AG04450 (cell line): ENCODE measurements at regions of chr9 and their contacts with region 1.

Region 1: DNA sequence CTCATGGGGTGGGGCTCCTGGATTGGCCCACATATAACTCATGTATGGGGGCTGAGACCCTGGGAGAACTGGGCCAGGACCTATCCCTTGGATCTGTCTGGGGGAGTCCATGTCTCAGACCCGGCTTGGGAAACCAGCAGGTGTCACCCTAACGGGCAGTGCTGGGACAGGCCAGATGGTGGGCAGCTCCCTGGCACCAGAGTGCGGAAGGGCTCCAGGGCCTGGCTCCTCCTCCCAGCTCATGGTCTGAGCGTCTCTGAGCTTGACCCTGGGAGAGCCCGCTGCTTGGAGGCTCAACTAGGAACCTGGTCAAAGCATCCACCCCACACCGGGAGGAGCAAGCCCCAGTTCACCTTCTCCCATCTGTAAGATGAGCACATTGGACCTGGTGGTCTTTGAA is 15.5 kb upstream of the NCS1 start:
- DNase-seq: no peak
- H3K4me3 ChIP-seq: no peak overlapping the region
- H3K27ac ChIP-seq: no peak overlapping the region
- H3K27me3 ChIP-seq: no peaks in the 10 kb centered on the region
- CTCF ChIP-seq: no peak

Region 2: DNA sequence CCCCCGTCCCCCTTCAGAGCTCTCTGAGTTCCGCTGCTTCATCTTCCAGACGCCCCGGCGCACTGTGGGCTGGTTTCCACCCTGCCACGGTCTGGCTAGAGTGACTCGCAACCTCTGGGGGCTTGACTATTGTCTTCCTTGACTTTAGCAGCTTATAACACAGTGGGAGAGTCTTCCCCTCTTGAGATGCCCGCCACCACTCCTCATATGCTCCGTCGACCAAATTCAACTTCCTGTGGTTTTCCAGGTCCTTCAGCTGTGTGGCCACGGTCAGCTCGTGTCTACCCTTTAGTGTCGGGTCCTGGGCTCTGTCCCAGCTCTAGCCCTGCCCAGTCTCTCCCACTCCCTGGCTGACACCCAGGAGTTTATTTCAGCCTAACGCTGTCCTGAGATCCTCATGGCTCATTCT is 12.7 kb before region 1 on chr9:
- CTCF ChIA-PET with region 1: no interaction called
- POLR2A ChIA-PET with region 1: interaction called, 11 read pairs
- DNase-seq: no peak
- H3K4me3 ChIP-seq: no peak overlapping the region
- H3K27ac ChIP-seq: no peak overlapping the region
- H3K27me3 ChIP-seq: peaks cover 3% of the 10 kb centered on the region
- CTCF ChIP-seq: no peak